Activated B cell treated with CpG ODN at 0.5 μM for 24 hours (primary cell): ENCODE measurements at regions of chr7 and their contacts with region 1.

Region 1: GRCh38 chr7:149714050-149714909 is 59.1 kb downstream of the ZNF467 start:
- DNase-seq: peak; percentile 88
- ATAC-seq: peak; percentile 91
- H3K4me3 Mint-ChIP-seq: peak overlapping the region; percentile 83
- H3K27ac Mint-ChIP-seq: no peak overlapping the region
- H3K4me1 Mint-ChIP-seq: peaks cover 17% of the 10 kb centered on the region
- H3K27me3 Mint-ChIP-seq: no peaks in the 10 kb centered on the region
- CTCF ChIP-seq: no peak

Region 2: DNA sequence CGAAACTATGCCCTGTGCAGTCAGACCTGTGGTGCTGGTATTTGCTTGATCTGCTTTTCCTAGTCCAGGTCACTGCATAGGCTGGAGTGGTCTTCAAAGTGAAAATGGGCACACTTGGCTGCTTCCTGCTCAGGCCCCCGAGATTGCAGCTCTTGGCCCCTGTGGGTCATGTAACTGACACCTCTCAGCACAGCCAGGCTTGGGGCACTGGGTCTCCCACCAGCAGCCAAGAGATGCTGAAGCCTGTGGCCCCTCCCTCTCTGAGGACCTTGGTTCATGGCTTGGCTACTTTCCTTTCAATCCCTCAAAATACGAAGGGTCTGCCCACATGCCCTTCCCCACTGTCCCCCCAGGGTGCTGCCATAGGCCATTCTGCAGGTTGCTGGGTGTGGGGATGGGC is 719.7 kb before region 1 on chr7:
- CTCF ChIA-PET with region 1: no interaction called
- POLR2A ChIA-PET with region 1: no interaction called
- intact Hi-C with region 1: no loop called
- DNase-seq: no peak
- ATAC-seq: no peak
- H3K4me3 Mint-ChIP-seq: no peak overlapping the region
- H3K27ac Mint-ChIP-seq: no peak overlapping the region
- H3K4me1 Mint-ChIP-seq: no peaks in the 10 kb centered on the region
- H3K27me3 Mint-ChIP-seq: no peaks in the 10 kb centered on the region
- CTCF ChIP-seq: no peak

Region 3: GRCh38 chr7:149261829-149262617 is 452.3 kb before region 1 on chr7 and contains the start of gene ZNF783:
- CTCF ChIA-PET with region 1: no interaction called
- POLR2A ChIA-PET with region 1: no interaction called
- intact Hi-C with region 1: loop called (anchors 2 kb)
- DNase-seq: peak; percentile 88
- ATAC-seq: peak; percentile 91
- H3K4me3 Mint-ChIP-seq: peak within 1 kb of the TSS; percentile 89
- H3K27ac Mint-ChIP-seq: peak within 1 kb of the TSS; percentile 90
- H3K4me1 Mint-ChIP-seq: peaks cover 23% of the 10 kb centered on the region
- H3K27me3 Mint-ChIP-seq: no peaks in the 10 kb centered on the region
- CTCF ChIP-seq: no peak
- total RNA-seq, gene ZNF783: 28.5 and 34.1 TPM in 2 replicates

Region 4: DNA sequence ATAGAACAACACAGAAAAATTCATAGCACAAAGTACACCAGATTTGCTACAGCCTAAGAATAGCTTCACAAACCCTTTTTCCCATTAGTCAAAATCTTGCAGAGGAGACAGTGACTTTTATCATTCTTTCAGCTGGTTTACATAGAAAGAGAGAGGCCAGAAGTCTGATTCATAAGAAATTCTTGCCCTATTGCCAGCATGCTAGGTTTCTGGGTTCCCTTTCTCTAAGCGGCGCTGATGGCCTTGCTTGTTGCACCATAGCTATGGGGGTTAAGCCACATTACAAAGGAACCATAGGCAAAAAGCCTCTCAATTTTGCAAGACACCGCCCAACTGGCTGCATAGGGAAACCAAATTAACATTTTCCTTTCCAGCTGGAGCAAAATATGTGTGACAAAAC is 28.3 kb before region 1 on chr7:
- CTCF ChIA-PET with region 1: no interaction called
- POLR2A ChIA-PET with region 1: no interaction called
- intact Hi-C with region 1: no loop called
- DNase-seq: no peak
- ATAC-seq: no peak
- H3K4me3 Mint-ChIP-seq: no peak overlapping the region
- H3K27ac Mint-ChIP-seq: no peak overlapping the region
- H3K4me1 Mint-ChIP-seq: no peaks in the 10 kb centered on the region
- H3K27me3 Mint-ChIP-seq: peaks cover 34% of the 10 kb centered on the region
- CTCF ChIP-seq: no peak

Region 5: GRCh38 chr7:149771721-149772240 is 57.5 kb after region 1 on chr7:
- CTCF ChIA-PET with region 1: no interaction called
- POLR2A ChIA-PET with region 1: interaction called, 4 read pairs
- intact Hi-C with region 1: loop called (anchors 1 kb)
- DNase-seq: peak; percentile 84
- ATAC-seq: peak; percentile 97
- H3K4me3 Mint-ChIP-seq: peak overlapping the region; percentile 80
- H3K27ac Mint-ChIP-seq: no peak overlapping the region
- H3K4me1 Mint-ChIP-seq: no peaks in the 10 kb centered on the region
- H3K27me3 Mint-ChIP-seq: peaks cover 8% of the 10 kb centered on the region
- CTCF ChIP-seq: no peak

Region 6: GRCh38 chr7:150974468-150975391 is 1260.5 kb after region 1 on chr7:
- CTCF ChIA-PET with region 1: no interaction called
- POLR2A ChIA-PET with region 1: no interaction called
- intact Hi-C with region 1: loop called (anchors 10 kb)
- DNase-seq: peak; percentile 54
- ATAC-seq: peak; percentile 84
- H3K4me3 Mint-ChIP-seq: peak overlapping the region; percentile 85
- H3K27ac Mint-ChIP-seq: no peak overlapping the region
- H3K4me1 Mint-ChIP-seq: peaks cover 41% of the 10 kb centered on the region
- H3K27me3 Mint-ChIP-seq: peaks cover 29% of the 10 kb centered on the region
- CTCF ChIP-seq: no peak

Region 7: GRCh38 chr7:151341357-151342101 is 1627.2 kb after region 1 on chr7 and contains the start of gene NUB1:
- CTCF ChIA-PET with region 1: no interaction called
- POLR2A ChIA-PET with region 1: no interaction called
- intact Hi-C with region 1: loop called (anchors 10 kb)
- DNase-seq: peak; percentile 99
- ATAC-seq: peak; percentile 90
- H3K4me3 Mint-ChIP-seq: peak within 1 kb of the TSS; percentile 86
- H3K27ac Mint-ChIP-seq: peak within 1 kb of the TSS; percentile 93
- H3K4me1 Mint-ChIP-seq: peaks cover 52% of the 10 kb centered on the region
- H3K27me3 Mint-ChIP-seq: no peaks in the 10 kb centered on the region
- CTCF ChIP-seq: no peak
- total RNA-seq, gene NUB1: 47.5 and 52.7 TPM in 2 replicates